Posterior cingulate gyrus (tissue), 11 donors: ENCODE measurements at regions of chr6 and their contacts with region 1.

Region 1: DNA sequence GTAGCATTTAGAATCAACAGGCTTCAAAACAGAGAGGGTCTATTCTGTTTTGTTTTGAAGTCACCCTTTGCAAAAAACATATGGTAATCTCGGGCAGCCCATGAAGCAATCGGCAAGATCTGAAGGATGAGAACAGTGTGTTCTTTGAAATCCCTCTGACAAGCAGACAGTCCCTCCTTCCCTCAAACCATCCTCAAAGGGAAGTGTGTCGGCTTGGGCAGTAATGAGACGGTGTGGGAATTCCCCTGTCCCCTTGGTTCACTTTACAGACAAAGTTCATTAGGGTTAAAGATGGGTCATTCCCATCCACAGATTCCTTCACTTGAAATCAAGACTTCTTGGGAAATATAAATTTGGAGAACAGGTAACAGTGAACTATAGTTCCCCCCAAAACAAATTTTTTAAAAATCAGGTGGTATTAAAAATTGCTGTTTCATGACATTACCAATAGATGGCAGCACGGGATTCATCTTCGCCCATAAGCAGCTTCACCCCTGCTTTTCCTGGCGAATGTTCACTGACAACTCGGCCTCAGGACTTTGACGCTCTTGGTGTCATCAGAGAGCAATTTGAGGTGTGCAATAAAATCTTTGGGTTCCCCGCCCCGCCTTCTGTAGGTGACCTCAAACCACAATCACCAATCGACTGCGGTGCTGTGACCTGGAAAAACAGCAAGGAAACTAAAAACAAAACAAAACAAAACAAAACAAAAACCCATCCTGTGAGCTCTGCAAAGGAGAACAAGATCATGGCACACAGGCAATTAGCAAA is 159.3 kb upstream of the TNFAIP3 start:
- DNase-seq: peak in 4 of 10 donors; percentile 17 to 87 (median 34)

Region 2: GRCh38 chr6:137866914-137867684 is 159.3 kb after region 1 on chr6 and contains the start of gene TNFAIP3:
- intact Hi-C with region 1: loop called (anchors 1 kb)
- DNase-seq: peak; percentile 61 to 96 (median 76)

Region 3: DNA sequence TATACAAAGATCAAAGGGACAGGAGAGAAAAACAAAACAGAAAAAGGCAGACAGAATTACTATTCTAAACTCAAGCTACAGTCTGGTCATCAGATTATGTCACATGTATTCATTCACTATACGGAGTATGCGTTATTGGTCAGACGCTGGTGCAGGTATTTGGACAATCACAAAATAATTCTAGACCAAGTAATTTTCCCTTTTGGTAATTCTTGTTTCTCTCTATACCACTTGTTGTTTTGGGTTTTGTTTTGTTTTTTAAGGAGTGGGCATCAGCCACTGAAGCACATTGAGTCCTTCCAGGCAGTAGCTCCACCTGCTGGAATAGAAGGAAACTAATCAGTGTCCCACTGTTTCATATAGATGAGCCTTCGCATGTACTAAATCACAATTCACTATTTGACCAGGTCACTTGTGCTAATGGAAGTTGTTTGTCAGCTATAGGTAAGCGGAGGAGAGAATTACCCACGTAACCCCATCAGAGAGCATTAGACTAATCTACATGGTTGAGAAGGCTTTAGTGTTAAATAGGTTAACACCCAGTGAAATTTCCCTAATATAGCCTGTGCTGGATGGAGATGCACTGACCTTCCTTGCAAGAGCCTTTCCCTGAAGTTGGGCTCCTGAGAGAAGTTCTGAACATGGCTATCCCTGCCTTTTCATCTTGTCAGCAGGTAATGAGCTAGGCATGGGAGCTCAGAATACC is 237.2 kb after region 1 on chr6:
- intact Hi-C with region 1: loop called (anchors 2 kb)
- DNase-seq: no peak

Region 4: DNA sequence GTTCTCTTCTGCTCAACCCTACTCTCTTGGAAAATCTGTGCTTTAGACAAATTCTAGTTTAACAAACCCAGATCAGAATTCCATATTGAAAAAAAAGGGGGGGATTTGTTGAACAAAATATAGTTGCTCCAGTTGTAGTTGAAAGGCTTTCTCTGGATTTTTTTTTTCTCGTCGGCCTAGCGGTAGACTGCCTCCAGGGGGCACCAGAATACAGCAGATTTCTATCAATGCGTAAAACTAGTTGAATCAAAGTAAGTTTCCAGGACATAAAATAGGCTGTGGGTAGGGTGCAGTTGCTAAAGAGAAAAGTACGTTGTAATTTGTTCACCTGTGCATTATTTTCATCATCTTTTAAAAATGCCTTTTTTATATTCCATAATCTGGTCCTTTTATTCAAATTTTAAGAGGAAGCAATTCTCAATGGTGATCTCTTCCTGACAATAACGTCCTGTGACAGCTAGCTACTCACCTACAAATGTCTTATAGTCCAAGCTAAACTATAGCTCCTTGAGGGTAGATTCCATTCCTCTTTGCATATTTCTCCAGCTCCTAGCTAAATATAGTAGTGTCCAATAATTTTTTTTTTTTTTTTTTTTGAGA is 294.1 kb after region 1 on chr6:
- intact Hi-C with region 1: loop called (anchors 5 kb)
- DNase-seq: peak in 7 of 10 donors; percentile 17 to 90 (median 60)

Region 5: DNA sequence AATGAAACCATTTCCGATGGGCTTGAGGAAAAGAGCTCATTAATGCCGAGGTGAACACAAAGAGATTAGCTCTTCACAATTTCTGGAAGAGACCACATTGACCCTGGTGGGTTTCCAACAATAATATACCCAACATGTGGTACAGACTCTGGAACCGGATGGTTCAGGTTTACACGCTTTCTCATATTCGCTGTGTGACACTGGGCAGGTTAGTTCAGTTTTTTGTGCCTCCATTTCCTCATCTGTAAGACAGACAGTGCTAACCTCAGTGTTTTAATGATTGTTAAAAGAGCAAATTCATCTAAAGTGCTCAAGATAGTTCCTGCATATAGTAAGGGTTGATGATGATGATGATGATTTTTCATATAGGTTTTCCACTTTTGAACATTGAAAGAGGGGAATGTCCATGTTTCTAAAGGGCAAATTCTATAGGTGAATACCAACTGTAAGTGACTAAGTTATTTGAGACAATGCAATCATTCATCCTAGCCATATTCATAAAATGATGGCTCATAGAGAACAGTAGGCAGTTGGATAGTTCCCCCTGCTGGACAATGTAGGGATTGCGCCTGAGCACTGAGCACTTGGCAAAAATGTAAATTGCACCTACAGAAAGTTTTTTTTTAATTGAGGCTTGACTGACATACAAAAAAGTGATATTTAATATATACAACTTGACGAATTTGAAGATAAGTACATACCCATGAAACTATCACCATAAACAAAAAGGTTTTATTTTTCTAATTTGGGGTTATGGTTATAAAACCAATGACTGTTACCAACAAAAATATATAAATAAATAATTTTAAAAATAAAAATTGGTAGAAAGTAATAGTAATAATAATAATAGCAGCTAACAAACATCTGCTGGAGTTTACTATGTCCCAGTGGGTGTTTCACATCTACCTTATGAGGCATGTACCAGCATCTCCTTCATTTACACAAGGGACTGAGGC is 401.5 kb after region 1 on chr6:
- intact Hi-C with region 1: loop called (anchors 5 kb)
- DNase-seq: peak in 9 of 10 donors; percentile 34 to 90 (median 75)